GM12878 (cell line): ENCODE measurements at regions of chr22 and their contacts with region 1.

Region 1: DNA sequence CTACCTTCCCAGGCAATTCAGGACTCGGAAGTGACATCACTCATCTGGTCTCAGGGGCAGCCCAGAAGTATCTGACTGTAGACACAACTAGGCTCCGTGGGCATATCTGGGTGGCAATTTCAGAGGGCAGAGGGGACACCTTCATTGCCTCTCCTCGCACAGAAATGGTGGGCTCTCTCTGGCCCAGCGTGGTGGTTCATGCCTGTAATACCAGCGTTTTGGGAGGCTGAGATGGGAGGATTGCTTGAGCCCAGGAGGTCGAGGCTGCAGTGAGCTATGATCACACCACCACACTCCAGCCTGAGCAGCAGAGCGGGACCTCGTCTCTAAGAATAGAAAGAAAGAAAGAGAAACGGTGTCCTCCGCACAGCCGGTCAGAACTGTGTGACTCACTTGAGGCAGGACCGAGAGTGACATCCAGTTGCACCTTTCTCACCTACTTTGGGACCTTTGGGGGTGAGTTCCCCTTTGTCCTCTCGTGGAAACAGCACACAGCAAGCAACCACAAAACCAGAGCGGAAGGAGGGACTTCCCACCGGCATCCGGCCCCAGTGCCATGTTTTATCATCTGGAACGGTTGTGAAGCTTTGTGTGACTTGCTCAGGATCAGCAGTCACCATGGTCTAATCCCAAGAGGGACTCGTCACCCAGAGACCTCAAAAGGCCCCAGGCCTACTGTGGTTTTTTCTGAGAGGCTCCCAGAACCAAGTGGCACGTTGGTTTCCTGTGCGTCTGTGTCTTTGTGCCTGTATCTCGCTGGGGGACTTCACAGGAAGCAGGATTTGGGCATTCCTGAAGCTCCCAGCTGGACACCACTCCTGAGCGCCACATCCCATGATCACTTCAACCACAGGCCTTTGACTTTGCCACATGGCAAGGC is 38.4 kb upstream of the EMID1 start:
- DNase-seq: peak; percentile 100
- ATAC-seq: peak; percentile 88
- H3K4me3 ChIP-seq: no peak overlapping the region
- H3K27ac ChIP-seq: peak overlapping the region; percentile 76
- H3K4me1 ChIP-seq: peaks cover 27% of the 10 kb centered on the region
- H3K27me3 ChIP-seq: no peaks in the 10 kb centered on the region; a peak in 1 of 4 replicates
- CTCF ChIP-seq: no peak
- EP300 ChIP-seq: peak; percentile 98
- POLR2A ChIP-seq: no peak
- RAD21 ChIP-seq: peak; percentile 17; the same call in 1 of the 2 replicates

Region 2: DNA sequence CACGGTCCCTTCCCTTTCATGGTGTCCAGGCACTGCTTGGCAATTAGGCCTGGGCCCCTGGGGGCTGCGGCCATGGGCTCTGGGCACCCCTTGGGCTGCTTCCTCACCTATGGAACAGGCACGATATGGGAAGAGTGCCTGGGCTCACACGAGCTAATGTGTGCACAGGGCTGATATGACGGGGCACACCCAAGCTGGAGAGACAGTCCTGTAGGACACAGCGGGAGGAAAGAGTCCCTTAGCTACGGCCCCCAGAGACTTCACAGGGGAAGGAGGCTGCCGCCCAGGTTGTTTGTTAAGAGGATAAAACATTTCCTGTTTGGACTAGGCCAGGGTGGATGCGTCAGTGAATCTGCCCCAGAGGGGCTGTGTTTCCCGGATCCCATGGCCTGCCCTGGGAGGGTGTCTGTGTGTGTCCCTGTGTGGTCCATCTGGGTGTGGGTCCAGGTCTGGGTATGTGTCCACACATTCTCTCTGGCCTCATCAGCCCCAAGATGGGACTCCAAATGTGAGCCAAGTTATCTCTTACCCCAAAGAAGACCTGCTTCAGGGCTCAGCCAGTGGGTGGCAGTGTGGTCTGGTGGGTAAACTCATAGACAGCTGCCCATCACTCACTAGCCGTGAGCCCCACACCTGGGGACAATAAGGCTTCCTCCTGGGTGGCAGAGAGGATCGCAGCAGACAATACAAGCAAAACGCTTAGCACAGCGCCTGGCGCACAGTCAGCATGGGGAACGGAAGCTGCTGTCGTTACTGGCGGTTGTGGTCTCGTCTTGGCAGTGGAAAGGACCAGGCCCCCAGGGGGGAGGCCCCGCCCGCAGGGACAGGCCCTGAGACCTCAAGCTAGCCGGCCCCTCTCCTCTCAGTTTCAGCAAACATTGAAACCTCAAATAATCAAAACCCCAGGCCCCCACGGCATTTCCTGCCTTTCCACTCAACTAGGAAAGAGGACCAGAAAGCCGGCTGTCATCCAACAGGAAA is 35.2 kb after region 1 on chr22:
- CTCF ChIA-PET with region 1: interaction called, 78 read pairs
- POLR2A ChIA-PET with region 1: interaction called, 239 read pairs
- RAD21 ChIA-PET with region 1: interaction called, 153 read pairs
- SMC1A ChIA-PET with region 1: interaction called, 165 read pairs
- in situ Hi-C with region 1: loop called (anchors 5 kb)
- intact Hi-C with region 1: loop called (anchors 1 kb)
- DNase-seq: peak; percentile 91
- ATAC-seq: peak; percentile 77
- H3K4me3 ChIP-seq: peak overlapping the region; percentile 15; the same call in 1 of the 2 replicates
- H3K27ac ChIP-seq: peak overlapping the region; percentile 90
- H3K4me1 ChIP-seq: peaks cover 45% of the 10 kb centered on the region
- H3K27me3 ChIP-seq: no peaks in the 10 kb centered on the region; a peak in 1 of 4 replicates
- CTCF ChIP-seq: peak; percentile 41 to 43 (median 42); a peak in 4 of 6 replicates
- EP300 ChIP-seq: peak; percentile 76 to 94
- POLR2A ChIP-seq: peak; percentile 79
- RAD21 ChIP-seq: peak; percentile 15; the same call in 1 of the 2 replicates

Region 3: DNA sequence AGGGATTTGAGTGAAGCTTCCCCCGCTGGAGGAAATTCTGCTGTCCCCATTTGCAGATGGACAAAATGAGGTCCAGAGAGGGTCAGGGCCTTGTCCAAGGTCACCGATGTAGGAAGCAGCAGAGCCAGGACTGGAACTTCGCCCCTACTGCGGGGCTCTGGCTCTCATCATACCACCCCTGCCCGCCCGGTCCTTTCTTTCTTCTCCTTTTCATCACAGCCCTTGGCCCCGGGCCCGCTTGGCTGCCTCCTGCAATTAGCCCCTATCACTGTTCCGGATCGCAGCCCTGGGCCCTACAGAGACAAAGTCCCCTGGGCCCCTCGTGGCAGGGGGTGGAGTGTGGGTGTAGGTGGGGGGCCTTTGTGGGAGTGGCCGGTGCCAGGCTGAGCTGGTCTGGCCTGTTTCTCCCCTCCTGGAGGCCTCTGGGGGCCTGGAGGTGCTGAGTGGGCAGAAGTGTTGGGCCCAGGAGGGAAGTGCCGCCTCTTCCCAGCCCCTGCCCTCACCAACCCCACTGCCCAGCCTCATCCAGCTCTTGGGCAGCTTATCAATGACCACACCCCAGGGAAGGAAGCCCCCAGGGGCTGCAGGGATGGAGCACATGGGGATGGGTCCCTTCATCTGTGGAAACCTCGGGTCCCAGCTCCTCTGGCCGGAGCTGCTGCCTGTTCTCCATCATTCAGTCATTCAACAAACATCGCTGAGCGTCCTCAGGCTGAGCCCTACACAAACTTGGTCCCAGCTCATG is 41.8 kb after region 1 on chr22:
- CTCF ChIA-PET with region 1: interaction called, 78 read pairs
- POLR2A ChIA-PET with region 1: interaction called, 239 read pairs
- RAD21 ChIA-PET with region 1: interaction called, 153 read pairs
- SMC1A ChIA-PET with region 1: interaction called, 165 read pairs
- in situ Hi-C with region 1: loop called (anchors 5 kb)
- intact Hi-C with region 1: no loop called
- DNase-seq: peak; percentile 25
- ATAC-seq: peak; percentile 66
- H3K4me3 ChIP-seq: peak overlapping the region; percentile 65
- H3K27ac ChIP-seq: peak overlapping the region; percentile 66
- H3K4me1 ChIP-seq: peaks cover 29% of the 10 kb centered on the region
- H3K27me3 ChIP-seq: no peaks in the 10 kb centered on the region; a peak in 1 of 4 replicates
- CTCF ChIP-seq: no peak
- EP300 ChIP-seq: no peak
- POLR2A ChIP-seq: no peak
- RAD21 ChIP-seq: no peak